Activated CD4-positive, alpha-beta memory T cell treated with anti-CD3 and anti-CD28 coated beads for 36 hours (primary cell): ENCODE measurements at regions of chr4 and their contacts with region 1.

Region 1: DNA sequence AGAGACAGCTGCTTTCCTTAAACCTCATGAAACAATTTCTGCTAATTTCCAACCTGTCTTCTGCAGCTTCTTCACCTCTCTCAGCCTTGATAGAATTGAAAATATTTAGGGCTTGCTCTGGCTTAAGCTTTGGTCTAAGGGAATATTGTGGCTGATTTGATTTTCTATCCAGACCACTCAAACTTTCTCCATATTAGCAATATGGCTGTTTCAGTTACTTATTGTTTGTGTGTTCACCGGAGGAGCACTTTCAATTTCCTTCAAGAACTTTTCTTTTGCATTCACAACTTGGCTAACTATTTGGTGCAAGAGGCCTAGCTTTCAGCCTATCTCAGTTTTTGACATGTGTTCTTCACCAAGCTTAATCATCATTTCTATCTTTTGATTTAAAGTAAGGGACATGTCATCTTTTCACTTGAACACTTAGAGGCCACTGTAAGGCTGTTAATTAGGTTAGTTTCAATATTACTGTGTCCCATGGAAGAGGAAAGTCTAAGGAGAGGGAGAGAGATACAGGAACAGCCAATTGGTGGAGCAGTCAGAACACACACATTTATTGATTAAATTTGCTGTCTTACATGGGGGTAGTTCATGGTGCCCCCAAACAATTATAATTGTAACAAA is 213.2 kb downstream of the RASL11B start:
- DNase-seq: no peak
- H3K4me3 Mint-ChIP-seq: no peak overlapping the region
- H3K27ac Mint-ChIP-seq: no peak overlapping the region
- H3K4me1 Mint-ChIP-seq: peaks cover 8% of the 10 kb centered on the region
- H3K27me3 Mint-ChIP-seq: no peaks in the 10 kb centered on the region

Region 2: GRCh38 chr4:53037892-53038291 is 37.4 kb before region 1 on chr4:
- CTCF ChIA-PET with region 1: no interaction called
- POLR2A ChIA-PET with region 1: no interaction called
- intact Hi-C with region 1: loop called (anchors 1 kb)
- DNase-seq: no peak
- H3K4me3 Mint-ChIP-seq: no peak overlapping the region
- H3K27ac Mint-ChIP-seq: no peak overlapping the region
- H3K4me1 Mint-ChIP-seq: peaks cover 12% of the 10 kb centered on the region
- H3K27me3 Mint-ChIP-seq: no peaks in the 10 kb centered on the region

Region 3: DNA sequence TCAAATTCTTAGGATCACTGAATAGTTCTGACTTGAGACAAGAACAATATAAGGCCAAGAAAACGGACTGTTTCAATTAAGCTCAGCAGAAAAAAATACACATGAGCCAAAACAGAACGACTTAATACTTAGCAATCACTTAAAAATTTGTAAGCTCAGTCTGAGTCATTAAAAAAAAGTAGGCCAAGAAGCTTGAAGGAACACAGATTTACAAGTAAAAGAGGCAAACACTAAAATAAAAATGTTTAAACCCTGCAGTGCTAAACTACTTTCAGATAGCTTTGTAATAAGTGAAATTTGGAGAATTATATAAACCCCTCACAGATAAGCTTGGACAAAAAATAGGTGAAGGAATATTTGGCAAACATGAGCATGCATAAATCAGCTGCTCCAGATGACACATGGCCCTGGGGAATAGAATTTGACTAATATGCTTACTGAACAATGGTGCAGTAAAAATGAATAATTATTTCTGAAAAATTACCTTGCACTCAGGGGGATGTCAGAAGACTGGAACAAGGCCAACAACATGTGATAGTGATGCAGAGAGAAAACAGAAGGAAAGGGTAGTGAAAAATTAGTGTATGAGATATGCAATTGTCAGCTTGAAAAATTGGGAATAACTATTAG is 466.4 kb after region 1 on chr4:
- CTCF ChIA-PET with region 1: no interaction called
- POLR2A ChIA-PET with region 1: no interaction called
- intact Hi-C with region 1: no loop called
- DNase-seq: no peak
- H3K4me3 Mint-ChIP-seq: no peak overlapping the region
- H3K27ac Mint-ChIP-seq: no peak overlapping the region
- H3K4me1 Mint-ChIP-seq: no peaks in the 10 kb centered on the region
- H3K27me3 Mint-ChIP-seq: peaks cover 7% of the 10 kb centered on the region